Activated CD8-positive, alpha-beta T cell treated with anti-CD3 and anti-CD28 coated beads, Interleukin-2, amount 10 ng/mL, durations not matched to agents 7 days and 5 days (primary cell): ENCODE measurements at regions of chr1 and their contacts with region 1.

Region 1: GRCh38 chr1:2586154-2587070 is at the start of gene PRXL2B:
- DNase-seq: peak; percentile 99
- ATAC-seq: peak; percentile 86
- H3K4me3 Mint-ChIP-seq: peak within 1 kb of the TSS; percentile 82
- H3K27ac Mint-ChIP-seq: peak within 1 kb of the TSS; percentile 93
- H3K4me1 Mint-ChIP-seq: peaks cover 32% of the 10 kb centered on the region
- H3K27me3 Mint-ChIP-seq: no peaks in the 10 kb centered on the region
- total RNA-seq, gene PRXL2B: 35.6 to 40.6 TPM

Region 2: DNA sequence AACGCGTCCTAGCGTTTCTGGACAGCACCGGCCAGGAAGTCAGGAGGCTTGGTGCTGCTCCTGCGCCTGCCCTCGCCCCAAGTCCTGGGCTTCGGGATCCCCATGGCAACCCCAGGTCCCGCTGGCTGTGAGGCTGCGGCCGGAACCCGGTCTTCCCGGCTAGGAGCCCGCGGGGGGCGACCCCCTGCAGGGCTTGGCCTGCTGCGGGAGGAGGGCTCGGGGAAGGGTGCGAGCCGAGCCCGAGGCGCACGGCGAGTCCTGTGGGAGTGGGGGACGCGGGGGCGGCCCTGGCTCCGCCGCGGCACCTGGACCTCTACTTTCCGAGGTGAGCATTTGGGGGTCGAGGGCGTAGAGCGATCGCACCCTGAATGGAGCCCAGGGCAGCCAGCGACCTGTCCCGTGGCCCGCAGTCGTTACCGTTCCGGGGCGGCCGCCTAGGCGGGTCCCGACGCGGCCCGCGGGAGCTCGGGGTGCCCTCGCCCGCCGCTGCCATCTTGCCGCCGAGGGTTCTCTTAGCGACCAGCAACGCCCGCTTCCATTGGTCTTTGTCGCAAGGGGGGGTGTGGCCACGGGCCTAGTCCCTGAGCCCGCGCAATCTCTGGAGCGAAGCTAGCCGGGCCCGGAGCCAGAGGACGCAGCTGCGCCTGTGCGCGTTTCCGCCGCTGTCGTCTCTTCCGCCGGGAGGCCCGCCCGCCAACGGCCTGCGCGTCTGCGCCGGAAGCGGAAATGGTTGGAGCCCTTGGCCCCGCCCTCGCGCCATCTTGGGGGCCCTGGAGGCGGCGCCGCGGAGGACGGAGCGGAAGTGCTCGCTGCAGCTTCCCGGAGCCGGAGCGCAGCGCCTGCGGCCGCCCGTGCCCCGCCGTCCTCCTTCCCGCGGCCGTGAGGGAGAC is 195.1 kb before region 1 on chr1 and contains the starts of genes MORN1 and RER1:
- CTCF ChIA-PET with region 1: no interaction called
- POLR2A ChIA-PET with region 1: interaction called, 10 read pairs
- DNase-seq: peak; percentile 99
- ATAC-seq: peak; percentile 98
- H3K4me3 Mint-ChIP-seq: peak within 1 kb of the TSS; percentile 92
- H3K27ac Mint-ChIP-seq: peak within 1 kb of the TSS; percentile 92
- H3K4me1 Mint-ChIP-seq: peaks cover 40% of the 10 kb centered on the region
- H3K27me3 Mint-ChIP-seq: no peaks in the 10 kb centered on the region
- total RNA-seq, gene MORN1: 6.2 to 7.9 TPM
- total RNA-seq, gene RER1: 148 to 151 TPM

Region 3: GRCh38 chr1:2438038-2438437 is 148.4 kb before region 1 on chr1:
- CTCF ChIA-PET with region 1: no interaction called
- POLR2A ChIA-PET with region 1: no interaction called
- DNase-seq: no peak
- ATAC-seq: no peak
- H3K4me3 Mint-ChIP-seq: no peak overlapping the region
- H3K27ac Mint-ChIP-seq: no peak overlapping the region
- H3K4me1 Mint-ChIP-seq: no peaks in the 10 kb centered on the region
- H3K27me3 Mint-ChIP-seq: peaks cover 3% of the 10 kb centered on the region

Region 4: DNA sequence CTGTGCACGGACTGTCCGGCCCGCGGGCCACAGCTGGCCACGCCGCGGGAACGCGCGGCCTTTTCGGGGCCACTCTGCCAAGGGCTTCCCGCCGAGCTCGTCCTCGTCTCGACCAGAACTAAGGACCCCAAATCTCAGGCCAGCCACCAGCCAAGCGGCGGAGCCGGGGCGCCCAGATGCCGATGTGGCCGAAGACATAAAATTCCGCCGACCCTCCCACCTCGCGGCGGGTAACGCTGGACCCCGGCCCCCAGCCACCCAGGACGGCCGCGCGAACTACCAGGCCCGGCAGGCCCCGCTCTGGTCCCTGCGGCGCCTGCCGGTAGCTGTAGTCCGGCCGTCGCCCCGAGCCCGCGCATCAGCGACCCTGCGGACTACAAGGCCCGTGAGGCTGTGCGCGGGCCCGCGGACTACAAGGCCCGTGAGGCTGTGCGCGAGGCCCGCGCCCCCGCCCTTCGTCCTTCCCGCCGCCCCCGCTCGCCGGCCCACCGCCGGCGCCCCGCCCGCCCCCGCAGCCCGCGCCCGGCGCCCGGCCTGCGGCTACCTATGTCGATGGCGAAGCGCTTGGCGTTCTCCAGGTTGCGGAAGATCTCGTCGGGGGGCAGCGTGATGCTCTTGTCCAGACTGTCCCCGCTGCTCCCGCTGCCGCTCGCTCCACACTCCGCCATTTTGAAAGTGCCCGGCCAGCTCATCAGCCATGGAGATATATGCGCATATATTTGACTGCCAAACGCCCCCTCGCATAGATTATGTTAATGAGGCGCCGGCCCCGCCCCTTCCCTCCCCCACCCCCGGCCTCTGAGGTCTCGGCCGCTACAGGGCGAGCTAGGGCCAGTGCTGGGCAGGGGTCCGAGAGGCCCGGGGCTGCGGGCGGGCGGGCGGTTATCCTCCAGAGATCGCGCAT is 60.2 kb before region 1 on chr1 and contains the start of gene PANK4:
- CTCF ChIA-PET with region 1: interaction called, 10 read pairs
- POLR2A ChIA-PET with region 1: interaction called, 19 read pairs
- DNase-seq: peak; percentile 93
- ATAC-seq: peak; percentile 89
- H3K4me3 Mint-ChIP-seq: peak within 1 kb of the TSS; percentile 81
- H3K27ac Mint-ChIP-seq: peak within 1 kb of the TSS; percentile 94
- H3K4me1 Mint-ChIP-seq: peaks cover 49% of the 10 kb centered on the region
- H3K27me3 Mint-ChIP-seq: peaks cover 19% of the 10 kb centered on the region
- total RNA-seq, gene PANK4: 55.9 to 66.8 TPM

Region 5: DNA sequence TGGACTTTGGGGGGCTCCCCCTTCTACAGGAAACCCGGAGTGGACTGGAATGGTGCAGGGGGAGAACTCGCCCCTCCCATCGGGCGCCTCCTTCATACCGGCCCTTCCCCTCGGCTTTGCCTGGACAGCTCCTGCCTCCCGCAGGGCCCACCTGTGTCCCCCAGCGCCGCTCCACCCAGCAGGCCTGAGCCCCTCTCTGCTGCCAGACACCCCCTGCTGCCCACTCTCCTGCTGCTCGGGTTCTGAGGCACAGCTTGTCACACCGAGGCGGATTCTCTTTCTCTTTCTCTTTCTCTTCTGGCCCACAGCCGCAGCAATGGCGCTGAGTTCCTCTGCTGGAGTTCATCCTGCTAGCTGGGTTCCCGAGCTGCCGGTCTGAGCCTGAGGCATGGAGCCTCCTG is 30.1 kb before region 1 on chr1 and contains the start of gene TNFRSF14:
- CTCF ChIA-PET with region 1: interaction called, 42 read pairs
- POLR2A ChIA-PET with region 1: interaction called, 130 read pairs
- DNase-seq: peak; percentile 90
- ATAC-seq: peak; percentile 77
- H3K4me3 Mint-ChIP-seq: peak within 1 kb of the TSS; percentile 97
- H3K27ac Mint-ChIP-seq: peak within 1 kb of the TSS; percentile 98
- H3K4me1 Mint-ChIP-seq: peaks cover 46% of the 10 kb centered on the region
- H3K27me3 Mint-ChIP-seq: no peaks in the 10 kb centered on the region
- total RNA-seq, gene TNFRSF14: 85.8 to 86.5 TPM

Region 6: GRCh38 chr1:2570332-2570731 is 16.1 kb before region 1 on chr1:
- CTCF ChIA-PET with region 1: interaction called, 5 read pairs
- POLR2A ChIA-PET with region 1: interaction called, 42 read pairs
- DNase-seq: no peak
- ATAC-seq: no peak
- H3K4me3 Mint-ChIP-seq: no peak overlapping the region
- H3K27ac Mint-ChIP-seq: no peak overlapping the region
- H3K4me1 Mint-ChIP-seq: peaks cover 9% of the 10 kb centered on the region
- H3K27me3 Mint-ChIP-seq: peaks cover 5% of the 10 kb centered on the region